Gastrocnemius medialis (tissue), 4 donors: ENCODE measurements at regions of chr3 and their contacts with region 1.

Region 1: DNA sequence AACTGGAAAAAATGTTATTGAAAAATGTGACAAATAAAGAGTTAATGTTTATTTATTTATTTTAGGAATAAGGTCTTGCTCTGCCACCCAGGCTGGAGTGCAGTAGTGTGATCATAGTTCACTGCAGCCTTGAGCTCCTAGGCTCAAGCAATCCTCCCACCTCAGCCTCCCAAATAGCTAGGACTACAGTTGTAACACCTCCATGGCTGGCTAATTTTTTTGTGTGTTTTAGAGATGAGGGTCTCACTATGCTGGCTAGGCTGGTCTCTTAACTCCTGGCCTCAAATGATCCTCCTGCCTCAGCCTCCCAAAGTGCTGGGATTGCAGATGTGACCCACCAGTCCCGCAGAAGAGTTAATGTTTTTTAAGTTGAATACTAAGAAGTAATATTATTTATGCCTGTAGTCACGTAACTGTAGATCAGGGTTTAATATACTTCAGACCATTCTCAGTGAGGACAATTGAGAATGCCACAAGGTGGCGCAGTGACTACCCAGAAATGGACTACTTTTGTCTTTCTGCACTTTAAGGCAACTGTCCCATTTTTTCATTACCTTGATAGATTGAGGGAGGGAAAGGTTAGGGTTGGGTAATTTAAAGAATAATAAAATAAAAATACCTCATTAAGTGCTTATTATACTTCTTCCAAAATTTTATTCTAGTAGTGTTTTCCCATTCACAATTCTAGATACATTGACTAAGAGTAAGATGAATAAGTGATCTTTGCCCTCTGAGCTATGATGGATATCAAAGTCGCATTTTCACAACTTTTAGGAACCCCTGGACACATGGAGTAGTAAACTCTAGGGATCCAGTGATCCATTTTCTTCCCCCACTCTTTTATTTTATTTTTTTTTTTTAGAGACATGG is 6.0 kb downstream of the MUC13 start:
- DNase-seq: peak in 1 of 2 donors; percentile 35
- ATAC-seq: peak; percentile 30 to 50
- H3K4me3 ChIP-seq: no peak overlapping the region
- H3K27ac ChIP-seq: no peak overlapping the region
- H3K4me1 ChIP-seq: peaks cover 9 to 14% of the 10 kb centered on the region in 2 donors
- H3K27me3 ChIP-seq: no peaks in the 10 kb centered on the region
- CTCF ChIP-seq: peak in 4 of 5 experiments; percentile 35 to 65 (median 52)
- POLR2A ChIP-seq: no peak

Region 2: GRCh38 chr3:124860599-124860998 is 68.0 kb before region 1 on chr3:
- in situ Hi-C with region 1: no loop called
- intact Hi-C with region 1: no loop called
- DNase-seq: peak; percentile 79 to 87
- ATAC-seq: peak; percentile 96 to 97
- H3K4me3 ChIP-seq: no peak overlapping the region
- H3K27ac ChIP-seq: peak overlapping the region; percentile 14 to 69 (median 58)
- H3K4me1 ChIP-seq: peaks cover 10 to 12% of the 10 kb centered on the region in 2 donors
- H3K27me3 ChIP-seq: no peaks in the 10 kb centered on the region
- CTCF ChIP-seq: no peak
- POLR2A ChIP-seq: no peak

Region 3: DNA sequence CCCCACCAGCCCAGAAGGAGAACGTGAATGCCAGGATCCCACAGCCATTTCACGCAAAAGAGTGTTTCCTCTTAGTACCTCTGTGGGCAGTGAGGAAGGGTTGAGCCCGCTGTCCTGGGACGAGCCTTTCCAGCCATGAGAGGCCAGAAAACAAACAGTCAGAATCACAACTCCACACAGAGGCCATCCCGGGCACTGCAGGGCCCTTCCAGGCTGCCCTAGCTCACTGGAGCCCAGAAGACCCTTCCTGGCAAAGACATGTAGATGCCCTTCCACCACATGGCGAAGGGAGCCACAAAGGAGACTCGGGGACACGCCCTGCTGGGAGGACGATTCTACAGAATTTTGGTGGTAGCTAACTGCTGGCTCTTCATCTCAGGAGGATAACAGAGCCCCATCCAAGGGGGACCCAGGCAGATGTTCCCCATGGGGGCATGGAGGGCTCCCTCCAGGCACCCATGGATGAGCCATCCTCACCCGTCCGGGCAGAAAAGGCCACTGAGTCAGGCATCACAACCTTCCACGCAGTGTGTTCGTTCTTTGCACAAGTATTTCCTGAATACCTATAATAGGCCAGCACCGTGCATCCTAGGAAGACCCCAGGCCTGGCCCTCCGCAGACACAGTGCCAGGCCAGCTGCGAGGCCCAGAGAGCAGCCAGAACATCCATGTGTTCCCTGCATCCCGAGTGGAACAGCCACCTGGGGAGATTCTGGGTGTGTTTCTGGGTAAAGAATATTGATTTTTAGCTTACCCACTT is 236.8 kb after region 1 on chr3:
- in situ Hi-C with region 1: loop called in 1 of 4 experiments (anchors 10 kb)
- intact Hi-C with region 1: loop called (anchors 5 kb)
- DNase-seq: no peak
- ATAC-seq: peak in 1 of 2 donors; percentile 82
- H3K4me3 ChIP-seq: no peak overlapping the region
- H3K27ac ChIP-seq: no peak overlapping the region
- H3K4me1 ChIP-seq: no peaks in the 10 kb centered on the region
- H3K27me3 ChIP-seq: no peaks in the 10 kb centered on the region
- CTCF ChIP-seq: peak; percentile 36 to 70 (median 65)
- POLR2A ChIP-seq: no peak

Region 4: DNA sequence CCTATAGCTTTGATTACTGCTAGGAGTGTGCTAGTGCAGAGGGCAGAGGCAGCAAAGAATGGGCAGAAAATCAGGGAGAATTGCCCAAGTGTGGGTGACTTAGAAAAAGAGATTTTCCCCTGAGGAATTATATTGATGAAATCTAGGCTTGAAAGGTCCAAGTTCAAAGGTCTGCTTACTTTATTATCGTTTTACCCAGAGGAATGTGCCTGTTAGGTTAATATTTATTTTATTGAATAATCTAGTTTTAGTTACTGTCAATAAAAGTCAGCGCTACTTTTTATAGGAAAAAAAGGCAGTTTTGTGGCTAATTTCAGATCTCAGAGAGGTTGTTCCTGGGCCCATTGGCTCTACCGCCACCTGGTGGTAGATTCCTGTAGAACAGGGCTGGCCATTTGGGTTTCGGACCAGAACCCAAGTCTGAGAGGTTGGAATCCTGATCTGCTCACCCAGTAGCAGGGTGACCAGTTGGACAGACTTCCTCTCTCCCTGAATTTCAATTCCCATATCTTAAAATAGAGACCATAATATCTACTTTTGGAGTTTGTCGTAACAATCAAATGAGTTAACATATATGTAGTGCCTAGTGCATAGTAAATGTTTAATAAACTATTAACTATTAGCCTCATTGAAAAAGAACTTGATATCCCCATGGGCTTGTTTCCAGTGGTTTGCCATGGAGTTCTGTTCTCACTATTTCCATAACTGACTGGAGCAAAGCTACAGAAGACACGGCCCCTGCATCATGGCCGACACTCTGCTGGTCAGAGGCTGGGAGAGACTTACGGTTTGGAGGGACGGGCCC is 509.3 kb after region 1 on chr3:
- in situ Hi-C with region 1: loop called in 1 of 4 experiments (anchors 10 kb)
- intact Hi-C with region 1: loop called (anchors 5 kb)
- DNase-seq: peak; percentile 5 to 18
- ATAC-seq: peak in 1 of 2 donors; percentile 53
- H3K4me3 ChIP-seq: no peak overlapping the region
- H3K27ac ChIP-seq: no peak overlapping the region
- H3K4me1 ChIP-seq: no peaks in the 10 kb centered on the region
- H3K27me3 ChIP-seq: no peaks in the 10 kb centered on the region
- CTCF ChIP-seq: peak; percentile 84 to 97 (median 89)
- POLR2A ChIP-seq: no peak